Activated T-helper 1 cell treated with anti-CD3 and anti-CD28 coated beads, Interleukin-12 subunit alpha, Interleukin-12 subunit beta, Interleukin-2, Interleukin-4 antibody, amounts not matched to agents 30 ng/mL and 10 ng/mL and 1 ng/mL, durations not matched to agents 14 hours and 24 hours and 36 hours (primary cell): ENCODE measurements at regions of chr22 and their contacts with region 1.

Region 1: DNA sequence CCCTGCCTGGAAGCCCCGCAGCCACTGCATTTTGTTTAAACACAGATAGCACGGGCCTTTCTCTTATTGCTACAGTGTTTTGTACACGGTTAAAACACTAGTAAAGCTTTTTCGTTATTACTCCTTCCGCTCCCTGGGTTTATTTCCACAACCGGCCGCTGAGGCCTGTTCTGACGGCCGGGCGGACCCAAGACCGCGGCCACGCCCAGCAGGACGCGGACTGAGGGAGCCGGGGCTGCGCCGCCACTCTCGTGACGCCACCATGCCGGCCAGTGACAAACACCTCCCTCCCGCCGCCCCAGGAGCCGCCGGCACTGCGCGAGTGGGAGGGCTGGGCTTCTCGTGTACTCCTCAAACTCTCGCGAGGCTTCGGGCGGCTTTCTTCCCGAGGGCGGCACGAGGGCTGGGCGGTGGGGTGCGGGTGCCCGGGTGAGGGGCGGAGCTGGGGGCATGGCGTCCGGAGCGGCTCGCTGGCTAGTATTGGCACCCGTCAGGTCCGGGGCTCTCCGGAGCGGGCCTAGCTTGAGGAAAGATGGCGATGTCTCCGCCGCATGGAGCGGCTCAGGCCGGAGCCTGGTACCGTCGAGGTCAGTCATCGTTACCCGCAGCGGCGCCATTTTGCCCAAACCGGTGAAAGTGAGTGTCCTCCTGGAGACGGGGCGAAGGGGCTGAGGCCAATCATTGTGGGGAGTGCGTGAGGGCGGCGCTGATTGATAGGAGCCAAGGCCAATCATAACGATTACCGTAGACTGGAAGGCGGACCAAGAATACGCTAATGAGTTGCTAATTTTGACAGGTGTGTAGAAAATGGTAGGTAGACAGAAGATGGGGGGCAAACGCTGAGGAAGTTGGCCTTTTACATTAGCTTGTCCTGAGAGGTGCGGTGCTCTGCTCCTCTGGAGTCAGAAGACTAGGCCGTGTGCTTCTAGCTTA is at the start of gene SMDT1:
- DNase-seq: peak; percentile 98
- H3K4me3 Mint-ChIP-seq: peak within 1 kb of the TSS; percentile 89
- H3K27ac Mint-ChIP-seq: peak within 1 kb of the TSS; percentile 92
- H3K4me1 Mint-ChIP-seq: peaks cover 34% of the 10 kb centered on the region
- H3K27me3 Mint-ChIP-seq: no peaks in the 10 kb centered on the region
- total RNA-seq, gene SMDT1: 53.9 and 58.2 TPM in 2 replicates

Region 2: DNA sequence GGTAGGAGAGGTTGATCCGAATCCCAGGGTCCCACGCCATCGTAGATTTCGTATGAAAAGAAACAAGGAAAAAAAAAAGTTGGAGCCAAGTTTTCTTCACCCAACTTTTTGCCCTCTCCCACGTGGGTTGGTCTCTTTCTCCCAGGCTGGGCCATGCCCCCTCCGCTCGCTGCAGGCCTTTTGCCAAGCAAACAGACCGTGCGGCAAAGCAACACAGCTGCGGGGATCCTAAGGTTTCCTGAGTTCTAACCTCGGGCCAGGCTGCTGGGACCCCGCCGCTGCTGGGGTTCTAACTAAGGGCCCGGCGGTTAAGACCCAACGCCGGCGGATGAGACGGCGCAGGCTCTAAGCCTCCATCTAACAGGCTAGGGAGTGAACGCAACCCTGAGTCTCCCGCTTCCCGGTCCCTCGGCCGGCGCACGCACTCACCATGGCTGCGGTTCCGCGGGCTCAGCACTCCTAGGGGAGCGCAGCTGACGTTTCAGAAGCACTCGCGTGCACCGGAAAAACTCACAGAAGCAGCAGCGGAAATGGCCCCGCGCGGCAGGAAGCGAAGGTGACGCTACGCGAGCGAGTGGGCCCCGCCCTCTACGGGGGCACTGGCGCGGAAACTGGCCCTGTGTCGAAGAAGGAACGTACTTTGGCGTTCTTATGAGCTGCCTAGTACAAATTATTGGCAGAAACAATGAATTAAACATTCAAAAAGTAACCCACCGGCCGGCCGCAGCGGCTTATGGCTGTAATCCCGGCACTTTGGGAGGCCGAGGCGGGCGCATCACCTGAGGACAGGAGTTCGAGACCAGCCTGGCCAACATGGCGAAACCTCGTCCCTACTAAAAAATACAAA is 391.0 kb before region 1 on chr22 and contains the start of gene SNU13:
- intact Hi-C with region 1: loop called (anchors 10 kb)
- DNase-seq: peak; percentile 92
- H3K4me3 Mint-ChIP-seq: peak within 1 kb of the TSS; percentile 98
- H3K27ac Mint-ChIP-seq: peak within 1 kb of the TSS; percentile 98
- H3K4me1 Mint-ChIP-seq: peaks cover 17% of the 10 kb centered on the region
- H3K27me3 Mint-ChIP-seq: no peaks in the 10 kb centered on the region
- total RNA-seq, gene SNU13: 337 and 339 TPM in 2 replicates

Region 3: DNA sequence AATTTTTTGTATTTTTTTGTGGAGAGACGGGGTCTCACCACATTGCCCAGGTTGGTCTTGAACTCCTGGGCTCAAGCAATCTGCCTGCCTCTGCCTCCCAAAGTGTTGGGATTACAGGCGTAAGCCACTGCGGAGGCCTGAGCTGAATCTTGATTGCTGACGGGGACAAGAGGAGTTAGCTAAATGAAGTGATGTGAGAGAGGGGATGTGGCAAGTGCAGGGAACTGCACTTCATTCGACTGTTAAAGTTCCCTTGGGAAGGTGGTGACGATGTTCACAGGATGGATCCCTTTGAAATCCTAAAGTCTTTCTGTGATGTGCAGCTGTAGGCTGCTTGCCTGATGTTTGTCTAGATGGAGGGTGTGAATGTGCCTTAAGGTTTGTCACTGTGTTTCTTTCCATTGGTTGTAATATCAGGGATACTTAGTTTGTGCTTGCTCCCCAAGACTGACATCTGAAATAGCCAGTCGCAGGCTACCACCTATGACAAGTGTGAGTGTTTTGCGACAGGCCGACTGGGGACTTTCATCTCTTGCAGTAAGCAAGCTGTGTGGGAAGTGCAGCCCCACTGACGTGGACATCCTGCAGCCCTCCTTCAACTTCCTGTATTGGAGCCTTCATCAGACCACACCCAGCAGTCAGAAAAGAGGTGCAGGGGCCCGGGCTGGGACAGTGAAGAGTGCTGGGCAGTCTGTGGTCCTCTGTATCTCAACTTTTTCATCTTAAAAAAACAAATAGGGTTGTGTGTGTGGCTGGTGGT is 298.7 kb before region 1 on chr22:
- intact Hi-C with region 1: loop called (anchors 1 kb)
- DNase-seq: peak; percentile 90
- H3K4me3 Mint-ChIP-seq: peak overlapping the region; percentile 83
- H3K27ac Mint-ChIP-seq: peak overlapping the region; percentile 91
- H3K4me1 Mint-ChIP-seq: peaks cover 41% of the 10 kb centered on the region
- H3K27me3 Mint-ChIP-seq: peaks cover 2% of the 10 kb centered on the region

Region 4: DNA sequence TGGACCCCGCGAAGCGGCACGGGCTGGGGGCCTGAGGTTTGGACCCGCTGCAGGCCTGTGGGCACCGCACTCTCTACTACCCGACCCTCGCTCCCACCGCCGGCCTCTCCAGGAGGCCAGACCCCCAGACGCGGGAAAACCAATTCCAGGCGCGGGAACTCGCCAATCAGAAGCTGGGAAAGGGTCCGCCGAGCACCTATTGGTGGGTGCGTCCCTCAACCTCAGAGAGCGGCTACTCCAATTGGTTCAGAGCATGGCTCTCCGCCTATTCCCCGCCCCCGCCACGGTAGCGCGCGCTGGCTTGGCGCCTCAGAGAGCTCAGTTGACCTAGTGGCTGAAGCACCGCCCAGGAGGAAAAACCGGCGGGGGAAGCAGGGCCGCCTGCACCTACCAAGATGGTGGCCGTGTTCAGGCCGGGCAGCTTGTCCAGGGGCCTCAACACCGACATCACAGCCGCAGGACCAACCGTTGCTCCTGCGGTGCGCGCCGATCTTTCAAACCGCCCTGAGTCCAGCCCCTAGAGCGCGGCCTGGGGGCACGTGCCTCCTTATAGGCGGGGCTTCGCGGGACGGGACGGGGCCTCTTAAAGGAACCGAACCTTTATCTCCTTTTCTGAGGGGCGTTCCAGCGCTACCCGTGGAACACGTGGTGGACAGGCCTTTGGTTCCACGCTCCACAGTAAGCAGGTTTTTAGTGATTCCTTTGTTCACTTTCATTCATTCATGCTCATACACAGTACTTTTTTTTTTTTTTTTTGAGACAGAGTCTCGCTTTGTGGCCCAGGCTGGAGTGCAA is 132.8 kb before region 1 on chr22 and contains the start of gene CENPM:
- intact Hi-C with region 1: loop called (anchors 1 kb)
- DNase-seq: peak; percentile 93
- H3K4me3 Mint-ChIP-seq: peak within 1 kb of the TSS; percentile 92
- H3K27ac Mint-ChIP-seq: peak within 1 kb of the TSS; percentile 93
- H3K4me1 Mint-ChIP-seq: peaks cover 47% of the 10 kb centered on the region
- H3K27me3 Mint-ChIP-seq: no peaks in the 10 kb centered on the region
- total RNA-seq, gene CENPM: 82.0 and 84.6 TPM in 2 replicates

Region 5: GRCh38 chr22:41976401-41976901 is 103.1 kb before region 1 on chr22:
- intact Hi-C with region 1: loop called (anchors 2 kb)
- DNase-seq: peak; percentile 62
- H3K4me3 Mint-ChIP-seq: peak overlapping the region; percentile 70
- H3K27ac Mint-ChIP-seq: peak overlapping the region; percentile 3
- H3K4me1 Mint-ChIP-seq: peaks cover 21% of the 10 kb centered on the region
- H3K27me3 Mint-ChIP-seq: peaks cover 32% of the 10 kb centered on the region

Region 6: DNA sequence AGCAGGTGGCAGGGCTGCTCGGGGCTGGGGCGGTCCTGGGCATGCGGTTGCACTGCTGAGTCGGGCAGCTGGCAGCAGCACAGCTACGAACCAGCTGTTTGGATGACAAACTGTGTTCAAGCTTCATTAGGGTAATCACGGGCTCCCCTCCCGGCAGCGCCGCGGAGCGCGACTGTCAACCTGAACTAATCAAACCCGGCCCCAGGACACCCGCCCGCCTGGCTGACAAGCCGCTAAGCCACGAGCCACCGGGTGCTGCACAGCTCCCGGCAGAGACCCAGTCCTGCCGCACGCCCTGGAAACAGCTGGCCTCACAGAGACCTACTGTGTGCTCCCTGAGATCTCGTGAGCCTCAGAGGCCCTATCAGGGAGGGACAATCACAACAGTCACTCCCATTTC is 251.4 kb after region 1 on chr22:
- intact Hi-C with region 1: no loop called
- DNase-seq: no peak
- H3K4me3 Mint-ChIP-seq: no peak overlapping the region
- H3K27ac Mint-ChIP-seq: no peak overlapping the region
- H3K4me1 Mint-ChIP-seq: peaks cover 15% of the 10 kb centered on the region
- H3K27me3 Mint-ChIP-seq: peaks cover 1% of the 10 kb centered on the region